K562 (cell line): ENCODE measurements at regions of chr2 and their contacts with region 1.

Region 1: GRCh38 chr2:65129826-65130663 is at the start of gene RAB1A:
- DNase-seq: peak; percentile 93 to 99 (median 96)
- ATAC-seq: peak; percentile 94
- H3K4me3 ChIP-seq: peak within 1 kb of the TSS; percentile 100
- H3K27ac ChIP-seq: peak within 1 kb of the TSS; percentile 99
- H3K4me1 ChIP-seq: peaks cover 30 to 32% of the 10 kb centered on the region in 2 experiments
- H3K27me3 ChIP-seq: no peaks in the 10 kb centered on the region
- CTCF ChIP-seq: peak; percentile 27 to 67 (median 63); a peak in 4 of 6 replicates
- EP300 ChIP-seq: 0 out of 2 replicates have a peak, but pooled peaks have one; percentile 33
- POLR2A ChIP-seq: peak; percentile 92
- RAD21 ChIP-seq: no peak
- polyA plus RNA-seq, gene RAB1A: 43.8 to 47.8 TPM

Region 2: DNA sequence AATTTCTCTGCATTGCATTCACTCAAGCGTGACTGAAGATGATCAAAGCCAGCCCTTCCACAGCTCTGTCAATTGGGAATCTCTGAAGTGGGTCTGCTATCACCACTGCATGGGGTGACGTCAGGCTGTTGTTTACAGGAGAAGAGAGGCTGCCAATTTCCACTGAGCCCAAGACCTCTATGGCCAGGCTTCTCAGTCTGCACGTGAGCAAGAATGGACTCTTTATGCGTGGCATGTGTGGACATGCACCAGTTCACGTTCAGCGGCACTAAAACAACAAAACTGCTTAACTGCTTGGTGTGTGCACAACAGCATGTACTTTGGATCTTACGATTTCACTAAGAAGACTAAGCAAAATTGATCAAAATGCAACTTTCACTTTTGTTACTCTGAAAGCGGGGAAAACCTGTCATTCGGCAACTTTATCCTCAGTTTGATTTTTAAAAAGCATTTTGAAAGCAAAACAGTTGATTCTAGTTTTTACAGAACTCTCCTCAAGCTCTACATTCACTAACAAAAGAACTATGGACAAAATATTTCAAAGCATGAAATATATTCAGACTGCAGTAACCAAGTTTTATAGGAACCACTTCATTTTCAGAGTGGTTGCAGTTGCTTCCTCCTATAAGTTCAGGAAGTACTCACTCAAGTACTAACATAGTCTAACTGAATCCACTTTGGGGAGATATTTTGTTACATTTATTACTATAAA is 399.3 kb before region 1 on chr2:
- CTCF ChIA-PET with region 1: no interaction called
- POLR2A ChIA-PET with region 1: no interaction called
- in situ Hi-C with region 1: no loop called
- intact Hi-C with region 1: no loop called
- DNase-seq: peak in 1 of 4 experiments; percentile 27
- ATAC-seq: peak; percentile 69
- H3K4me3 ChIP-seq: no peak overlapping the region
- H3K27ac ChIP-seq: no peak overlapping the region
- H3K4me1 ChIP-seq: peaks cover 5 to 18% of the 10 kb centered on the region in 2 experiments
- H3K27me3 ChIP-seq: no peaks in the 10 kb centered on the region
- CTCF ChIP-seq: no peak
- EP300 ChIP-seq: no peak
- POLR2A ChIP-seq: no peak
- RAD21 ChIP-seq: no peak

Region 3: GRCh38 chr2:65116645-65117044 is 13.4 kb before region 1 on chr2:
- CTCF ChIA-PET with region 1: no interaction called
- POLR2A ChIA-PET with region 1: interaction called, 30 read pairs
- in situ Hi-C with region 1: no loop called
- intact Hi-C with region 1: no loop called
- DNase-seq: no peak
- ATAC-seq: peak; percentile 55; the same call in 2 of the 3 replicates
- H3K4me3 ChIP-seq: no peak overlapping the region
- H3K27ac ChIP-seq: no peak overlapping the region
- H3K4me1 ChIP-seq: peaks cover 0 to 2% of the 10 kb centered on the region in 2 experiments; a peak in 1 of 5 replicates
- H3K27me3 ChIP-seq: no peaks in the 10 kb centered on the region
- CTCF ChIP-seq: no peak
- EP300 ChIP-seq: no peak
- POLR2A ChIP-seq: no peak
- RAD21 ChIP-seq: no peak

Region 4: GRCh38 chr2:65142515-65142914 is 12.5 kb after region 1 on chr2:
- CTCF ChIA-PET with region 1: no interaction called
- POLR2A ChIA-PET with region 1: interaction called, 13 read pairs
- in situ Hi-C with region 1: no loop called
- intact Hi-C with region 1: no loop called
- DNase-seq: no peak
- ATAC-seq: peak; percentile 71
- H3K4me3 ChIP-seq: no peak overlapping the region
- H3K27ac ChIP-seq: no peak overlapping the region
- H3K4me1 ChIP-seq: no peaks in the 10 kb centered on the region; a peak in 2 of 5 replicates
- H3K27me3 ChIP-seq: no peaks in the 10 kb centered on the region
- CTCF ChIP-seq: peak; percentile 18 to 43 (median 30); a peak in 4 of 6 replicates
- EP300 ChIP-seq: no peak
- POLR2A ChIP-seq: no peak
- RAD21 ChIP-seq: peak in 1 of 2 experiments; percentile 36; a peak in 1 of 4 replicates

Region 5: DNA sequence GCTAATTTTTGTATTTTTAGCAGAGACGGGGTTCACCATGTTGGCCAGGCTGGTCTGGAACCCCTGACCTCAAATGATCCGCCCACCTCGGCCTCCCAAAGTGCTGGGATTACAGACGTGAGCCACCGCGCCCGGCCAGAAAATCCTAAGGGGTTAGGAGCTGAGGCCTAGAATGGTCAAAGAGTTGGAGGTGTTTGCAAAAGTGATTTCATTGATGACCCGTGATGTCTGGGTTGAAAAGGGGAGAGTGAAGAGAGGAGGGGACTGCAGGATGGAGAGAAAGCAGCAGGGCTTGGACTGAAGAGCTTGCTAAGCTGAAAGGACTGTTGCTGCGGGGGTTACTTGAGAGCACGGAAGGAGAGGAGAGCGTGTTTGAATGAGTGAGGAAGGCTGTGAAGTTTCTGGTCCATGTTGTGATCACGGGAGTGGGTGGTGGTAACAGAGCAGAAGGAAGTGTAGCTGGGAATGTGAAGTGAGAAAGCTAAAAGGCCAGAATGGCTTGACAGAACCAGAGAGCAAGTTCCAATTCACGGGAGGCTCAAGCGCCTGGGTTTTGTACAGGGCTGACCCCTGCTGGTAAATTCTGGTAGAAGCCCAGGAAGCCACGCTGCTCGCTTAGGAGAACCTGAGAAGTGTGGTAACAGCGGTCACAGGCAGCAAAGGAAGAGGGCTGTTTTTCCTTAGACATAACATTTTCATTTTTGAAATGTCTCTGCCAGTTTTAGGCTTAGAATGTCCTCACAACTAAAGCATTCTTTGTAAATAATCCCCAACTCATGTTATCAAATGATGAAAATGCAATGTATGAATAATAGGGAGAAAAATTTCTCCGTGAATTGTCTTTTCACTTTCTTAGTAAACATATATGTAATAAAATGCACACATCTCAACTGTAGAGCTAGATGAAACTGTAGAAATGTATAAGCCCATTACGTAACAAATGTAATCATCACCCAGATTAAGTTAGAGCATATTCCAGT is 57.1 kb after region 1 on chr2:
- CTCF ChIA-PET with region 1: no interaction called
- POLR2A ChIA-PET with region 1: interaction called, 3 read pairs
- in situ Hi-C with region 1: no loop called
- intact Hi-C with region 1: loop called (anchors 1 kb)
- DNase-seq: peak; percentile 80 to 87 (median 82)
- ATAC-seq: peak; percentile 99
- H3K4me3 ChIP-seq: no peak overlapping the region
- H3K27ac ChIP-seq: no peak overlapping the region
- H3K4me1 ChIP-seq: peaks cover 3 to 4% of the 10 kb centered on the region in 2 experiments; a peak in 2 of 5 replicates
- H3K27me3 ChIP-seq: no peaks in the 10 kb centered on the region
- CTCF ChIP-seq: peak; percentile 83 to 90 (median 87)
- EP300 ChIP-seq: no peak
- POLR2A ChIP-seq: no peak
- RAD21 ChIP-seq: peak; percentile 71 to 89

Region 6: GRCh38 chr2:65198737-65199136 is 68.7 kb after region 1 on chr2:
- CTCF ChIA-PET with region 1: no interaction called
- POLR2A ChIA-PET with region 1: no interaction called
- in situ Hi-C with region 1: no loop called
- intact Hi-C with region 1: no loop called
- DNase-seq: no peak
- ATAC-seq: peak; percentile 31; the same call in 1 of the 3 replicates
- H3K4me3 ChIP-seq: no peak overlapping the region
- H3K27ac ChIP-seq: no peak overlapping the region
- H3K4me1 ChIP-seq: peaks cover 0 to 3% of the 10 kb centered on the region in 2 experiments; a peak in 2 of 5 replicates
- H3K27me3 ChIP-seq: no peaks in the 10 kb centered on the region
- CTCF ChIP-seq: no peak
- EP300 ChIP-seq: no peak
- POLR2A ChIP-seq: no peak
- RAD21 ChIP-seq: no peak

Region 7: GRCh38 chr2:65227425-65228262 is 97.6 kb after region 1 on chr2 and contains the start of gene ACTR2:
- CTCF ChIA-PET with region 1: no interaction called
- POLR2A ChIA-PET with region 1: interaction called, 4 read pairs
- in situ Hi-C with region 1: no loop called
- intact Hi-C with region 1: loop called (anchors 2 kb)
- DNase-seq: peak; percentile 87 to 97 (median 92)
- ATAC-seq: peak; percentile 88
- H3K4me3 ChIP-seq: peak within 1 kb of the TSS; percentile 72
- H3K27ac ChIP-seq: peak within 1 kb of the TSS; percentile 90
- H3K4me1 ChIP-seq: peaks cover 9 to 12% of the 10 kb centered on the region in 2 experiments; a peak in 3 of 5 replicates
- H3K27me3 ChIP-seq: no peaks in the 10 kb centered on the region
- CTCF ChIP-seq: no peak
- EP300 ChIP-seq: peak; percentile 17; the same call in 1 of the 2 replicates
- POLR2A ChIP-seq: peak; percentile 96
- RAD21 ChIP-seq: no peak
- polyA plus RNA-seq, gene ACTR2: 47.3 to 57.3 TPM